ENCODE measurements at regions of chr22 and their contacts with region 1.

Region 1: DNA sequence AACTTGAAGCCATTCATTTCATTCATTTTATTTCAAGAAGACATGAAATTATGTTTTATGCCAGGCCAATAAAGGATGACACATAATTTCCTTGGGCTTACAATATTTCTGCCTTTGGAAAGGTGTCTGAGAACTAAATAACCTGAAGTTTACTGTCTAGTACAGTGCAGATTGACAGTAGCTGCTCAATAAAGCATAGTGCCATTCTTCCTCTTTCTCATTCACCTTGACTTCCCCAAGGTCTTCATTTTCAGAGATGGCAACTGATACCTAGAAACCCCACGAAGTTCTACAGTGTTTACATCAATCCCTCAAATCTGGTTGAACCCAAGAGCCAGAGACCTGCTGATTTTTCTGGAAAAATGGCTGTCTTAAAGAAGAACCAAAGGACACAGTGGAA is 144.3 kb upstream of the SYN3 start:
- DNase-seq: no peak
- H3K4me3 ChIP-seq: no peak overlapping the region
- H3K27ac ChIP-seq: no peak overlapping the region
- H3K4me1 ChIP-seq: no peaks in the 10 kb centered on the region
- H3K27me3 ChIP-seq: no peaks in the 10 kb centered on the region
- CTCF ChIP-seq: no peak

Region 2: DNA sequence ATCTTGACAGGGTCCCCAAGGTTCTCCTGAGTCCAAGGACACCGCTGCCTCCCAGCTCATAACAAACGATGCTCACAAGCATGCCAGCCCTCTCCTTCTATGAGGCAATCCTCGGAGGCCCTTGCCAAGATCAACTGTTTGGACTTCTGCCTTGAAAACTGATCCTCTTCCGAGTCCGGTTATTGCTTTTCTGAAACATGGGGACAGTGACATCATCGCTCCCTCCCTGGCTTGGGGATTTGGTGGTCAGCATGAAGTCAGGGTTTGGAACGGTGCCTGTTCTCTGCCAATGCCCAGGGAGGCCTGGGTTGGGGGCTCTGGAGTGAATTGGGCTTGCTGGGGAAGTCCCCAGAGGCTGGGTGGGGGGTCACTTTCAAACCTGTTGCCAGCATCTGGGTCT is 578.5 kb before region 1 on chr22:
- intact Hi-C with region 1: no loop called
- DNase-seq: peak; percentile 62
- H3K4me3 ChIP-seq: no peak overlapping the region
- H3K27ac ChIP-seq: no peak overlapping the region
- H3K4me1 ChIP-seq: no peaks in the 10 kb centered on the region
- H3K27me3 ChIP-seq: no peaks in the 10 kb centered on the region
- CTCF ChIP-seq: no peak

Region 3: GRCh38 chr22:33018232-33018864 is 184.1 kb before region 1 on chr22:
- intact Hi-C with region 1: loop called (anchors 5 kb)
- DNase-seq: peak; percentile 45
- H3K4me3 ChIP-seq: no peak overlapping the region
- H3K27ac ChIP-seq: no peak overlapping the region
- H3K4me1 ChIP-seq: no peaks in the 10 kb centered on the region
- H3K27me3 ChIP-seq: no peaks in the 10 kb centered on the region
- CTCF ChIP-seq: peak; percentile 85

Region 4: GRCh38 chr22:33261699-33262098 is 59.2 kb after region 1 on chr22:
- intact Hi-C with region 1: no loop called
- DNase-seq: no peak
- H3K4me3 ChIP-seq: no peak overlapping the region
- H3K27ac ChIP-seq: no peak overlapping the region
- H3K4me1 ChIP-seq: no peaks in the 10 kb centered on the region
- H3K27me3 ChIP-seq: no peaks in the 10 kb centered on the region
- CTCF ChIP-seq: no peak

Region 5: DNA sequence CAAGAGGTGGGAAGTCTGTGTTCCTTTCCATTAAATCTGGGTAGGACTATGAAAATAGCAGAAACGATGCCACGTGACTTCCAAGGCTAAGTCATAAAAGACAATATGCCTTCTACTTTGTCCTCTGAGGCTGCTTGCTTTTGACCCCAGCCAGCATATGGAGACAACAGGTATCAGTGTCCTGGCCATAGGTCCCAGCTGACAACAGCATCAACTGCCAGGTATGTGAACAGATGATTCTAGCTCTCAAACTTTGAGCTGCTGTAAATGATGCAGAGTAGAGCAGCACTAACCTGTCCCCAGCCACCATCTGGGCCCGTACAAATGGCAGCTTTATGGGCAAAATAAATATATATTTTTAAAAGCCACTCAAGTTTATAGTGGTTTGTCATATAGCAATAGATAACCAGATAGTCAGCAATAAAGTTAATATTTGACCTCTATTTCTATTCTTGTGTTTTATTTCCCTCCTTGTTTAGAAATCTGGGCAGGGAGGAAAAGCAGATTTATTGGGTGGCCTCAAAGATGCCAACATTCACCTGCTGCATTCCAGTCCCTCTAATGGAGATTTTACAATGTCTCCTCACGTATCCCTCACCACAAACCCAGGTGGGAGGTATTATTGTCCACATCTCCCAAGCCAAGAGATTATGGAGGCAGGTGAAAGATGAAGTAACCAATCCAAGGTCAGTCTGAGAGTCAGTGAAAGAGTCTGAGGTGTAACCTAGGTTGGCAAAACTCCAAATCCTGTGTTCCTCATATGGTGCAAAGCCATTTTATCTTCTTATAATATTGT is 927.4 kb after region 1 on chr22:
- intact Hi-C with region 1: no loop called
- DNase-seq: peak; percentile 28
- H3K4me3 ChIP-seq: no peak overlapping the region
- H3K27ac ChIP-seq: peak overlapping the region; percentile 44
- H3K4me1 ChIP-seq: no peaks in the 10 kb centered on the region
- H3K27me3 ChIP-seq: no peaks in the 10 kb centered on the region
- CTCF ChIP-seq: no peak

Measured in colonic mucosa (tissue), 4 donors.